GM13977 (cell line): ENCODE measurements at regions of chr4 and their contacts with region 1.

Region 1: GRCh38 chr4:119041951-119042560 is 93.6 kb upstream of the MYOZ2 start:
- DNase-seq: peak; percentile 67
- CTCF ChIP-seq: peak; percentile 61

Region 2: DNA sequence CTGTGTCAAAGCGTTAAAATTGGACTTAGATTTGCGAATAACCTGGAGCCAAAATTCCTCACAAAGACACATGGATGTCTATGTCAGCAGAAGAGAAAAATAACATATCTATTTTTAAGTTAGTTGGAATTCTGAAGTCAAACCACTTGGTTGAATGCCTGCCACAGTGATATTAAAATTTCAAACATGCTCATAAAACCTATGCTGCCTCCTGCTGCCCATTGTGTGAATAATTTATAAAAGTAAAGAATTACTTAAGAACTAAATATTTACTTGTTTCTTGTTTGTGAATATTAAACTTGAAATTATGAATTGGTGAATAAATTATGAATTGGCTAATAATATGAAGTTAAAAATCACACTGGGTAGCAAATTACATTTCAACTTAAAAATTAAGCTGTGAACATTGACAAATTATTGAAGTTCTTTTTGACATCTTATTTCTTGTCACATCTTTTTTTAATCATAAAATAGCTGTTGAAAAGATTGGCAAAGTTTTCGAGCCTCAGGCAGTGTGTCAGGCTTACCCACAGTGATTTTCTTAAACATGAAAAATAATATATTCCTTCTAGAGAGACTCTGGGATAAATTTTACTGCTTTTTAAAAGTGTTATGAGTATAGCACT is 244.4 kb after region 1 on chr4:
- in situ Hi-C with region 1: loop called (anchors 10 kb)
- DNase-seq: no peak
- CTCF ChIP-seq: peak; percentile 60

Region 3: DNA sequence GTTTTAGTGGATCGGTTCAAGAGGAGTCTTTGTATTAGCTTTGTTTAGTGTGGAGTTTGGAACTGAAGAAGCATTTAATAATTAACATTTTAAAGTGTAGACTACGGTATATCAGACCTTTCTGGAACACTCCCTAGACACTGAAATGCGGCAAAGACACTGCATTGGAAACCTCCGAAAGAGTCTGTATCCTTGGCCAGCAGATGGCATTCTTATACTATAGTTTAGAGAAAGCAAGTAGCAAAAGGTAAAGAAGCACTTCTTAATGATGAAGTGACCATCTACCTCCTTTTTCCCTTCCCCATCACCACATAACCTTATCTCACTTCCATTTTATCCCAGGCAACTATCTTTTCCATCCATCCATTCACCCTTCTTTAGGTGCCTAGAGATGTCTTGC is 272.3 kb after region 1 on chr4:
- in situ Hi-C with region 1: no loop called
- DNase-seq: peak; percentile 18
- CTCF ChIP-seq: peak; percentile 56